BJ (cell line): ENCODE measurements at regions of chr6 and their contacts with region 1.

Region 1: GRCh38 chr6:32933636-32934085 is 7.2 kb downstream of the HLA-DMB start:
- DNase-seq: no peak
- H3K4me3 ChIP-seq: no peak overlapping the region
- H3K27me3 ChIP-seq: peaks cover 30% of the 10 kb centered on the region
- CTCF ChIP-seq: peak; percentile 82

Region 2: GRCh38 chr6:32885698-32886286 is 47.9 kb before region 1 on chr6:
- CTCF ChIA-PET with region 1: interaction called, 12 read pairs
- POLR2A ChIA-PET with region 1: no interaction called
- DNase-seq: peak; percentile 16
- H3K4me3 ChIP-seq: no peak overlapping the region
- H3K27me3 ChIP-seq: no peaks in the 10 kb centered on the region
- CTCF ChIP-seq: peak; percentile 45

Region 3: DNA sequence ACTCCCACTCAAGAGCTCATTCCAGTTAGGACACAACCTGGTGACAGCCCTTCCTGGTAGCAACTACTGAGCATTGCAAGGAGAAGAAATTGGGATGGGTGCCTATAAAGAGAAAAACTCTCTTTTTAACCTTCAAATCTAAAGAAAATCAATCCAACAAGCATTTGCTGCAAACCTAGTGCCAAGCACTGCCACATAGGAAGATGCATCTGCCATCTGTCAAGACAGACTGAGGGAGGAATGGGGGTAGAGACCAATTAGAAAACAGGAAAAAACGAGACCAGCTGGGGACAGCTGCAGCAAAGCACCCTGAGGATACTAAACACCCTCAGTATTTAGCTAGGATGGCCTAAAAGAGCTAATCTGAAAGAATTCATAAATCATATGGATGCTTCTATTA is 20.7 kb before region 1 on chr6:
- CTCF ChIA-PET with region 1: interaction called, 17 read pairs
- POLR2A ChIA-PET with region 1: no interaction called
- DNase-seq: no peak
- H3K4me3 ChIP-seq: no peak overlapping the region
- H3K27me3 ChIP-seq: no peaks in the 10 kb centered on the region
- CTCF ChIP-seq: no peak

Region 4: GRCh38 chr6:32947552-32948465 is 14.1 kb after region 1 on chr6:
- CTCF ChIA-PET with region 1: interaction called, 66 read pairs
- POLR2A ChIA-PET with region 1: no interaction called
- DNase-seq: no peak
- H3K4me3 ChIP-seq: no peak overlapping the region
- H3K27me3 ChIP-seq: no peaks in the 10 kb centered on the region; the same call in 1 of the 2 replicates
- CTCF ChIP-seq: peak; percentile 47

Region 5: DNA sequence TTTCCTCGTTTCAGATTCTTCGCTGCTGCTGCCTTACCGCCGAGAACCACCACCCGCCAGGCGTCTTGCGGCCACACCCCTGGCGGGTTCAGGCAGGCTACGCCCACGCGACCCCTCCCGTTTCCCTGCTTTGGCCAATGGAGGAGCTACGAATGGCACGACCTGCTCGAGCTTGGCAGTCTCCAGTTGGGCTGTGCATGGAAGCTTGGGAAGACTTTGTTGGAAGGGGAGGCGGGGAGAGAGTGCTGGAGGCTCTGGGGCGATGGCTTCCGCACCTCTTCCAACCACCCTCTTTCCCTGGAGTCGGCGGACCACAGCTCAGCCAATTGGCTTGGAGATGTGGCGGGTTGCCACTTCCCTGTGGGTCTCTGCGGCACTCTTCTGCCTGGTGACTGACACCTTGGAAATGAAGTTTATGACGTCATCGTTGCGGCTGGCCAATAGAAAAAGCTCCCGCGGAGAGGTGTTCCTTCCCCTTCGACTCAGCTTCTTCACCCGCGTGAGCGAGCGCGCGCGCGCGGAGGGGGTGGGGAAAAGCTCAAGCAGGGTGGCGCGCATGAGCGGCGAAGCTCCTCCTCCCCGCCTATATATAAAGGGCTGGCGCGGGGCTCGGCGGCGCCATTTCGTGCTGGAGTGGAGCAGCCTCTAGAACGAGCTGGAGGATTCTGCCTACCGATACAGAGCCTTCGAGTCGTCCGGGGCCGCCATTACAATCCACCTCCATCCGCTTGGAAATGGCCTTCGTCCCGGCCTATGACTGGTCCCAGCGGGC is 38.1 kb after region 1 on chr6:
- CTCF ChIA-PET with region 1: interaction called, 29 read pairs
- POLR2A ChIA-PET with region 1: interaction called, 9 read pairs
- DNase-seq: peak; percentile 99
- H3K4me3 ChIP-seq: peak overlapping the region; percentile 94
- H3K27me3 ChIP-seq: no peaks in the 10 kb centered on the region
- CTCF ChIP-seq: no peak